ENCODE measurements at regions of chr17 and their contacts with region 1.

Region 1: GRCh38 chr17:48636177-48637018 is 10.2 kb upstream of the HOXB9 start:
- DNase-seq: peak; percentile 93
- H3K4me3 ChIP-seq: no peak overlapping the region
- H3K27ac ChIP-seq: no peak overlapping the region
- H3K4me1 ChIP-seq: no peaks in the 10 kb centered on the region
- H3K27me3 ChIP-seq: peaks cover 3% of the 10 kb centered on the region
- CTCF ChIP-seq: peak; percentile 88

Region 2: DNA sequence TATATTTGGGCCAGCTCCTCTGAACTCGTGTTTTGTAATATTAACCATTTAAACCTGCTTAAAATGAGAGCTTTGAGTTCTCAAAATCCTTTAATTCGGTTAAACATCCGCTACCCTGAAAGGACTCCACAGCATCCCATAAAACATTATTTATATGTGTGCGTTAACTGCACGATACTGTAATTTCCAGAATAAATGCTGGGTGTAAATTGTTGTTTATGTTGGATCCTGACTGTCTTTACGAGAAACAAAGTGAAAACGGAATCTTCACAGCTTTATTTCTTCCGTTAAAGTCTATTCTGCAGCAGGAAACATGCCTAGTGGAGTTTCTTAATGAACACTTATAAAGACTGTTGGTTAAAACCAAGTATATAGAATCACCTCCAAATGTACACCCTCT is 385.4 kb before region 1 on chr17:
- CTCF ChIA-PET with region 1: interaction called, 20 read pairs
- POLR2A ChIA-PET with region 1: no interaction called
- intact Hi-C with region 1: no loop called
- DNase-seq: no peak
- H3K4me3 ChIP-seq: peak overlapping the region; percentile 16
- H3K27ac ChIP-seq: peak overlapping the region; percentile 29
- H3K4me1 ChIP-seq: peaks cover 43% of the 10 kb centered on the region
- H3K27me3 ChIP-seq: no peaks in the 10 kb centered on the region
- CTCF ChIP-seq: no peak

Region 3: DNA sequence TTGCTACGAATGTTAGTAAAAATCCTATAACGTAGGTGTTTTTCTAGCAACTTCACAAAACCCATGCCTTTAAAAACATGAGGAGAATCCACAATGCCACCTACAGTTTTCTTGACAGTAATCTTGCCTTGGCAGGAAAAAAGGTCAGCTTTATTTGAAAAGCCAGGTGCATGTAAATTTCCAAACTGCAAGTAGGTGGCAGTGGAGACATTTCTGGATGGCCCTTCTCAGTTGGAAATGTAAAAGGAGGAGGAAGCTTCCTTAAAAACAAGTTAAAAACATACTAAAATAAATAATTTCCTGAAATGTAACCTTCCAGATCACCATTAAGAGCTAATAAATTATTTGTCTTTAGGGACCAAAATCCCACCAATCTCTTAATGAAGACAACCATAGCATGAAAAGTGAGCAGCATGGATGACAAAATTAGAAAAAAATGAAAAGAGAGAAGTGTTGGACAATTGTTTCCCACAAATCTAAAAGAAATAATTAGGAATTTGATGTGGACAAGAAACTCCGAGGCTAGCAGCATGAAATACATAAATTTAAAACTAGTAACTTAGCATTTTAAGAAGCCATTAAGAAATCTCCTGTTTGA is 376.6 kb before region 1 on chr17:
- CTCF ChIA-PET with region 1: interaction called, 10 read pairs
- POLR2A ChIA-PET with region 1: no interaction called
- intact Hi-C with region 1: no loop called
- DNase-seq: peak; percentile 64
- H3K4me3 ChIP-seq: no peak overlapping the region
- H3K27ac ChIP-seq: no peak overlapping the region
- H3K4me1 ChIP-seq: peaks cover 39% of the 10 kb centered on the region
- H3K27me3 ChIP-seq: no peaks in the 10 kb centered on the region
- CTCF ChIP-seq: peak; percentile 69

Region 4: GRCh38 chr17:48671697-48672171 is 35.3 kb after region 1 on chr17:
- CTCF ChIA-PET with region 1: interaction called, 10 read pairs
- POLR2A ChIA-PET with region 1: no interaction called
- intact Hi-C with region 1: no loop called
- DNase-seq: peak; percentile 90
- H3K4me3 ChIP-seq: peak overlapping the region; percentile 42
- H3K27ac ChIP-seq: peak overlapping the region; percentile 52
- H3K4me1 ChIP-seq: peaks cover 6% of the 10 kb centered on the region
- H3K27me3 ChIP-seq: no peaks in the 10 kb centered on the region
- CTCF ChIP-seq: peak; percentile 92